Stomach (tissue), 19 donors: ENCODE measurements at regions of chr9 and their contacts with region 1.

Region 1: GRCh38 chr9:20219437-20219836 is 402.9 kb downstream of the MLLT3 start:
- DNase-seq: no peak
- H3K4me3 ChIP-seq: no peak overlapping the region
- H3K27ac ChIP-seq: no peak overlapping the region
- H3K4me1 ChIP-seq: no peaks in the 10 kb centered on the region
- H3K27me3 ChIP-seq: no peaks in the 10 kb centered on the region
- CTCF ChIP-seq: no peak
- EP300 ChIP-seq: no peak
- POLR2A ChIP-seq: no peak

Region 2: GRCh38 chr9:20125727-20126126 is 93.7 kb before region 1 on chr9:
- intact Hi-C with region 1: loop called (anchors 5 kb)
- DNase-seq: no peak
- H3K4me3 ChIP-seq: no peak overlapping the region
- H3K27ac ChIP-seq: no peak overlapping the region
- H3K4me1 ChIP-seq: no peaks in the 10 kb centered on the region
- H3K27me3 ChIP-seq: no peaks in the 10 kb centered on the region
- CTCF ChIP-seq: no peak
- EP300 ChIP-seq: no peak
- POLR2A ChIP-seq: no peak